MCF 10A (cell line): ENCODE measurements at regions of chr10 and their contacts with region 1.

Region 1: DNA sequence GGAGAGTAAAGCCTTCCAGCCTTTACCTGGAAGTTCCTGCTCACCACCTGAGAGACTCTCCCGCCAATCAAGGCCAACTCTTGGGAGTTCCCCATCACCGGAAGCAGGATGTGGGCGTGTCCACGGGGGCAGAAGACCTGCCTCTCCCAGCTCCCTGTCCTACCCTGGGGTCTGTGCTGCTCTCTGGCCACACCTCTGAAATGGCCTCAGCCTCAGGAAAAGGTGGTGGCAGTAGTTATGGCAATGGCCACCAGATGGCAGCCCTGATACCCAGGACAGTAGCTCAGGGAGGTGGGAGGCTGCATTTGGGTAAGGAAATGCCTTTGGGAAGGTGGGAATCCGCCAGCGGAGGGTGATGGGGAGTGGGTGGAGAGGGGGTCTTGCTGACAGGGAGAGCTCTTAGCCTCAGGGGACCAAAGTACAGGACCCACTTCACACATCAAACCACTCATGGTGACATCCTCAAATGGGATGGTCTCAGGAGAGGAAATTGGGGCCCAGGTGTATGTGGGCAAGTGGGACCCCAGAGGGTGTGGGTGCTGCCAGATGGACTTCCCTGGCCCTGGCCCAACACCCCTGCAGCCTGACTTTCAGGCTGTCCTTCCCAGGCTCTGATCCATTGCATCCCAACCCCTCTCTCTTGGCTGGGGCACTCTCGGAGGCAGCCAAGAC is 33.9 kb downstream of the KAZALD1 start:
- DNase-seq: peak; percentile 86
- H3K4me3 Mint-ChIP-seq: no peak overlapping the region
- H3K27ac Mint-ChIP-seq: no peak overlapping the region
- H3K4me1 Mint-ChIP-seq: peaks cover 9% of the 10 kb centered on the region
- H3K27me3 Mint-ChIP-seq: peaks cover 17% of the 10 kb centered on the region
- CTCF ChIP-seq: peak; percentile 74

Region 2: DNA sequence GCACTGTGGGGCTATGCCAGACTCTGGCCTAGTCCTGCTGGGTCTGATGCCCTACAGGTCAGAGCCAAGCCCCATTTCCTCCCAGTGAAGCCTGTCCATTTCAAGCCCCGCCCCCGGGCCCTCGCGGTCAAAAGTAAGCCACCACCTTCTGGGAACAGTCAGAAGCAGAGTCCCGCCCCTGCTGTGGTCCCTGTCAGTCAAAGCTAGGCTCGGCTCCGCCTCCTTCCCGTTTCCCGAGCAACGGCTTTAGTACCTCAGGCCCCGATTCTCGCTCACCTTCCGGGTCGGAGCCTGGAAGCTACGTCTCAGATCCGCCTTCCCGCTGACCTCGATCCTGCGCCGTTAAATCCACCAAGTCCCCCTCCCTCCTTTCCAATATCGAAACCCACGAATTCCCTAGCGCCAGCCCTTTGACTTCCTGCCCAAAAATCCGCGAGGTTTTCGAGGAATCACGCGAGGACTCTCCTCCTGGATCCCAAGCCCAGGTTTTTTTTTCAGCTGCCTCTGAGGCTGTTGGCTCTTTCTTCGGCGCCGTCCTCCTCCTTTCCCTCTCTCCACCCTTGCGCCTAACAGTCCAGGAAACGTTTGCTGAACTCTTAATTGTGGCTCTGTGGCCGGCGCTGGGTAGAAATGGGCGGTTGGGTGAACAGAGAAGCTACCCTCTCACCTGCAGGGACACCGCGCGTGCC is 52.9 kb before region 1 on chr10:
- CTCF ChIA-PET with region 1: interaction called, 20 read pairs
- POLR2A ChIA-PET with region 1: interaction called, 4 read pairs
- intact Hi-C with region 1: no loop called
- DNase-seq: peak; percentile 98
- H3K4me3 Mint-ChIP-seq: peak overlapping the region; percentile 98
- H3K27ac Mint-ChIP-seq: peak overlapping the region; percentile 100
- H3K4me1 Mint-ChIP-seq: peaks cover 29% of the 10 kb centered on the region
- H3K27me3 Mint-ChIP-seq: no peaks in the 10 kb centered on the region
- CTCF ChIP-seq: no peak

Region 3: DNA sequence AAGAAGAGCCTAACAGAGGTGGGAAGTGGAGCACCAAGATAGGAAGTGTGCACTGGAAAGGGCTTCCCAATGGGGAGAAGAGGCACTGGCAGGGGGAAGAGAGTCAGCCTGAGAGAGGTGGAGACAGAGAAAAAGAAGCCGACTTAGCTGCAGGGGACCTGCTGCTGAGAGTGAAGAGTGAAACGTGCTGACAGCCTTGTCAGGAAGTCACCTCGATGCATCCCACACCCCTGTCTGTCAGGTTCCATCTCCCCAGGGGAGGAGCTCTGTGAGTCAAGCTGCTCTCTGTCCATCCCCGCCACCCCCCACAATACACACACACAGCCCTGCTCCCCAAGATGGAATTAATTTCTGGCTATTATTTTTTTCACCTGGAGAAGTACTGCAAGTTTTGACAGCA is 19.9 kb before region 1 on chr10:
- CTCF ChIA-PET with region 1: interaction called, 28 read pairs
- POLR2A ChIA-PET with region 1: no interaction called
- intact Hi-C with region 1: no loop called
- DNase-seq: no peak
- H3K4me3 Mint-ChIP-seq: no peak overlapping the region
- H3K27ac Mint-ChIP-seq: no peak overlapping the region
- H3K4me1 Mint-ChIP-seq: peaks cover 8% of the 10 kb centered on the region
- H3K27me3 Mint-ChIP-seq: peaks cover 47% of the 10 kb centered on the region
- CTCF ChIP-seq: no peak

Region 4: DNA sequence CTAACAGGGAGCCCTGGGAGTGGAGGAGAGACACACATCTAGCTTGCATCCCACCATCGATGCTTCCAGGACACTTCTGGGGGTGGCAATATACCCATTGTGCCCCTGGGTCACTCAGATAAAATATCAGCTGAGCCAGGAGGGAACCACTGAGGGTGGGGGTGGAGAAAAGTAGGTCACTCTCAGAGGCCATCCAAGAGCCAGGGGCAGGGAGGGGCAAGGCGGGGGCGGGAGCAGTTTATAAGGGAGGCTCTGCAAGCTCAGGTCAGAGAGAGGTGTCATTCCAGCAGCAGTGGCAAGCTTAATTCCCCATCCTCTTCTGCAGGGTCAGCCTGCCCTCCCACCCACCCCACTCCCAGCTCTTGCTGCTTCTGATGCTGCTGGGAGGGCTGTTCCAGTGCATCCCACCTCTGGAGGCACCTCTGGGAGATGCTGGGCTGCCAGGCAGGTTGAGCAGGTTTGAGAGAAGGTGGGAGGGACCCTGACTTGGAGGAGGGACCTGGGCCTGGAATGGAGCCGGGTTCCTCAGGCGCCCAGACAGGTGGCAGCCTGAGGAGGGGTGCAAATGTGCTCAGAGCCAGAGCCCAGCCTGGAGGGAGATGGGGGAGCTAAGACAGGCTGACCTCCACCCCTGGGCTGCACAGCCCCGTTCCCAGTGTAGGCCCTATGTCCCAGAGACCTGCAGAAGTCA is 15.3 kb after region 1 on chr10:
- CTCF ChIA-PET with region 1: interaction called, 55 read pairs
- POLR2A ChIA-PET with region 1: no interaction called
- intact Hi-C with region 1: no loop called
- DNase-seq: no peak
- H3K4me3 Mint-ChIP-seq: no peak overlapping the region
- H3K27ac Mint-ChIP-seq: no peak overlapping the region
- H3K4me1 Mint-ChIP-seq: no peaks in the 10 kb centered on the region
- H3K27me3 Mint-ChIP-seq: peaks cover 24% of the 10 kb centered on the region
- CTCF ChIP-seq: no peak

Region 5: GRCh38 chr10:101126684-101127628 is 31.3 kb after region 1 on chr10:
- CTCF ChIA-PET with region 1: interaction called, 50 read pairs
- POLR2A ChIA-PET with region 1: interaction called, 4 read pairs
- intact Hi-C with region 1: no loop called
- DNase-seq: no peak
- H3K4me3 Mint-ChIP-seq: no peak overlapping the region
- H3K27ac Mint-ChIP-seq: no peak overlapping the region
- H3K4me1 Mint-ChIP-seq: no peaks in the 10 kb centered on the region
- H3K27me3 Mint-ChIP-seq: peaks cover 49% of the 10 kb centered on the region
- CTCF ChIP-seq: no peak

Region 6: DNA sequence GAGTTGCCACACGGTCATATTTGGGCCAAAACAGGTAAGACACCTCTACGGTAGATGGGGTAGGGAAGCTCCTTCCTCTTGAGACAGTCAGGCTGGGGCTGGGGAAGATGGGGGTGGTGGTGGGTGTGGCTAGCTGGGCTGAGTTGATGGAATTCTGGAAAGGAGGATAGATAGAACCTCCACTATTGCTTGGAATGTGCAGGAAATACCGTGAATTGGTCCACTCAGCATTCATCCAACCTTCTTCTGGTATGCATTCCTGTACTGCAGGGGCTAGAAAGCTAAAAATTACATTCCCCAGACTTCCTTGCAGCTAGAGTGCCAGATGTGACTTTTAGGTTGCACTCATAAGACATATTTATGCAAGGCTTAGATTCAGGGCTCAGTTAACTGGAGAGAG is 60.2 kb after region 1 on chr10:
- CTCF ChIA-PET with region 1: interaction called, 14 read pairs
- POLR2A ChIA-PET with region 1: no interaction called
- intact Hi-C with region 1: no loop called
- DNase-seq: no peak
- H3K4me3 Mint-ChIP-seq: no peak overlapping the region
- H3K27ac Mint-ChIP-seq: no peak overlapping the region
- H3K4me1 Mint-ChIP-seq: peaks cover 9% of the 10 kb centered on the region
- H3K27me3 Mint-ChIP-seq: peaks cover 37% of the 10 kb centered on the region
- CTCF ChIP-seq: no peak